ENCODE measurements at regions of chr16 and their contacts with region 1.

Region 1: GRCh38 chr16:82192665-82193064 is 22.6 kb upstream of the MPHOSPH6 start:
- DNase-seq: peak; percentile 35
- ATAC-seq: peak; percentile 99
- H3K4me3 Mint-ChIP-seq: peak overlapping the region; percentile 61
- H3K27ac Mint-ChIP-seq: peak overlapping the region; percentile 88
- H3K4me1 Mint-ChIP-seq: peaks cover 16% of the 10 kb centered on the region
- H3K27me3 Mint-ChIP-seq: peaks cover 13% of the 10 kb centered on the region

Region 2: GRCh38 chr16:82169861-82170845 is 22.5 kb before region 1 on chr16 and contains the start of gene MPHOSPH6:
- POLR2A ChIA-PET with region 1: interaction called, 15 read pairs
- DNase-seq: peak; percentile 93
- ATAC-seq: peak; percentile 97
- H3K4me3 Mint-ChIP-seq: peak within 1 kb of the TSS; percentile 93
- H3K27ac Mint-ChIP-seq: peak within 1 kb of the TSS; percentile 92
- H3K4me1 Mint-ChIP-seq: peaks cover 21% of the 10 kb centered on the region
- H3K27me3 Mint-ChIP-seq: peaks cover 34% of the 10 kb centered on the region
- total RNA-seq, gene MPHOSPH6: 25.0 to 25.6 TPM